ENCODE measurements at regions of chr10 and their contacts with region 1.

Region 1: DNA sequence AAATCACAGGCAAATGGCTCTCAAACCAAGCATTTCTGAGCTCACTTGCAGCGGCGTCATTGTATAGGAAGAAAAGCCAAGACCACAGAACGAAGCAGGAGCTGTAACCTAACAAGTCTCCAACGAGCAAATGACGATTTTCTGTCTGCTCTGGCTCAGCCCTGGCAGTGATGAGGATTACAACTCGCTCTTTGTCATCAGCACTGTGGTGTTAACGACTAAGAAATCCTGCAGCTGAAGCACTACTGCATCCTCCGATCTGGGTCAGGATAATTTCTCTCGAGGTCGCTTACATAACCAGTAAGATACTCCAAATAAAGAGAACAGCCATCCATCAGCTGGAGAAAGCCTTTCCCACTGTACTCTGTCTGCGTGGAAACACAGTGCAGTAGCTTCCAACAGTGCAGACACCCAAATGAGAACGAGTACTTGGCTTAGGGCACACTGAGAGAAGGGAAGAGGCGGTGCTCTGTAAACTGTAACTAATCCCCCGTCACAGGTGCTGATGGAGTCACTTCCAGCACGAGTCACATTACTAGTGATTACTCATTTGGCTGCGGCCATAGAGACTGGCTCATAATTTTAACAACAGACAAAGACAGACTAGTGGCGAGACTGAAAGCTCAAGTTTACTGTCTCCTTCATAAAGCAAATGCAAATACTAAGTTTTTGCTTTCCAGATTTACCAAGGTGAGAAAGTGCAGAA is 135.8 kb downstream of the NRBF2 start:
- DNase-seq: peak; percentile 86 to 95 (median 92)
- H3K4me3 ChIP-seq: peak overlapping the region; percentile 59 to 83
- H3K4me3 Mint-ChIP-seq: peak overlapping the region; percentile 96 to 100 (median 98)
- H3K27ac ChIP-seq: peak overlapping the region; percentile 94
- H3K27ac Mint-ChIP-seq: peak overlapping the region; percentile 95 to 100 (median 100)
- H3K4me1 ChIP-seq: peaks cover 35% of the 10 kb centered on the region
- H3K4me1 Mint-ChIP-seq: peaks cover 10 to 25% (median 19%) of the 10 kb centered on the region in 4 donors
- H3K27me3 ChIP-seq: no peaks in the 10 kb centered on the region
- H3K27me3 Mint-ChIP-seq: no peaks in the 10 kb centered on the region

Region 2: GRCh38 chr10:62384057-62384446 is 884.9 kb before region 1 on chr10:
- CTCF ChIA-PET with region 1: no interaction called
- POLR2A ChIA-PET with region 1: no interaction called
- intact Hi-C with region 1: loop called (anchors 5 kb)
- DNase-seq: peak; percentile 70 to 90 (median 72)
- H3K4me3 ChIP-seq: peak overlapping the region in 1 of 2 donors; percentile 20
- H3K4me3 Mint-ChIP-seq: peak overlapping the region; percentile 41 to 69 (median 62)
- H3K27ac ChIP-seq: peak overlapping the region; percentile 52
- H3K27ac Mint-ChIP-seq: peak overlapping the region; percentile 70 to 88 (median 81)
- H3K4me1 ChIP-seq: peaks cover 48% of the 10 kb centered on the region
- H3K4me1 Mint-ChIP-seq: peaks cover 42 to 87% (median 57%) of the 10 kb centered on the region in 4 donors
- H3K27me3 ChIP-seq: no peaks in the 10 kb centered on the region
- H3K27me3 Mint-ChIP-seq: no peaks in the 10 kb centered on the region

Region 3: GRCh38 chr10:63217120-63217605 is 51.8 kb before region 1 on chr10:
- CTCF ChIA-PET with region 1: interaction called, 14 read pairs
- POLR2A ChIA-PET with region 1: interaction called, 6 read pairs
- intact Hi-C with region 1: loop called (anchors 1 kb)
- DNase-seq: peak in 4 of 5 donors; percentile 60 to 68 (median 64)
- H3K4me3 ChIP-seq: no peak overlapping the region
- H3K4me3 Mint-ChIP-seq: peak overlapping the region in 4 of 8 donors; percentile 3 to 61 (median 24)
- H3K27ac ChIP-seq: no peak overlapping the region
- H3K27ac Mint-ChIP-seq: peak overlapping the region in 6 of 7 donors; percentile 25 to 81 (median 68)
- H3K4me1 ChIP-seq: peaks cover 50% of the 10 kb centered on the region
- H3K4me1 Mint-ChIP-seq: peaks cover 41 to 61% (median 43%) of the 10 kb centered on the region in 4 donors
- H3K27me3 ChIP-seq: no peaks in the 10 kb centered on the region
- H3K27me3 Mint-ChIP-seq: no peaks in the 10 kb centered on the region

Region 4: DNA sequence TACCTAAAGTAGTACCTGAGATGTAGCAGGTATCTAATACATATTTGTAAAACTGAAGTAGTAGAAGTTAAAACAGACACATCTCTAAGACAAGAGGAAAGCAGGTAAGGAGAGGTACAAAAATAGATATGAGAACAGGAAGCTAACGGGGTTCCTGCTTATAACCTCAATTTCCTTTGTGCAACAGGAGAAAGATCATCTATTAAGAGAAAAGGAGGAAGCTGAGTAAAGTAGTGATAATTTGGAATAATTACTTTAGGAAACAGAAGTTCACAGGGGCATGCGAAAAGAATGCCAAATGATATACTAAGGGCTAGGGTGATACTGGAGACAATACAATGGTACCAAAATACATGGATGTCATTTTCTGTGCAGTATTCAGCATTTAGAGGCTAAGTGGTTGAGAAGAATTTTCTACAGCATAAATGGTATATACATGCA is 27.1 kb before region 1 on chr10:
- CTCF ChIA-PET with region 1: interaction called, 3 read pairs
- POLR2A ChIA-PET with region 1: interaction called, 27 read pairs
- intact Hi-C with region 1: no loop called
- DNase-seq: peak in 1 of 5 donors; percentile 34
- H3K4me3 ChIP-seq: peak overlapping the region in 1 of 2 donors; percentile 3
- H3K4me3 Mint-ChIP-seq: peak overlapping the region; percentile 34 to 85 (median 80)
- H3K27ac ChIP-seq: peak overlapping the region; percentile 11
- H3K27ac Mint-ChIP-seq: peak overlapping the region; percentile 60 to 93 (median 75)
- H3K4me1 ChIP-seq: peaks cover 88% of the 10 kb centered on the region
- H3K4me1 Mint-ChIP-seq: peaks cover 55 to 84% (median 71%) of the 10 kb centered on the region in 4 donors
- H3K27me3 ChIP-seq: no peaks in the 10 kb centered on the region
- H3K27me3 Mint-ChIP-seq: no peaks in the 10 kb centered on the region

Region 5: GRCh38 chr10:63388421-63389031 is 119.6 kb after region 1 on chr10:
- CTCF ChIA-PET with region 1: no interaction called
- POLR2A ChIA-PET with region 1: no interaction called
- intact Hi-C with region 1: loop called (anchors 5 kb)
- DNase-seq: peak in 4 of 5 donors; percentile 44 to 63 (median 53)
- H3K4me3 ChIP-seq: peak overlapping the region; percentile 14 to 31
- H3K4me3 Mint-ChIP-seq: peak overlapping the region; percentile 69 to 92 (median 82)
- H3K27ac ChIP-seq: peak overlapping the region; percentile 23
- H3K27ac Mint-ChIP-seq: peak overlapping the region; percentile 24 to 83 (median 76)
- H3K4me1 ChIP-seq: peaks cover 40% of the 10 kb centered on the region
- H3K4me1 Mint-ChIP-seq: peaks cover 54 to 86% (median 71%) of the 10 kb centered on the region in 4 donors
- H3K27me3 ChIP-seq: no peaks in the 10 kb centered on the region
- H3K27me3 Mint-ChIP-seq: no peaks in the 10 kb centered on the region

Region 6: GRCh38 chr10:63521416-63522276 is 252.7 kb after region 1 on chr10:
- CTCF ChIA-PET with region 1: interaction called, 10 read pairs
- POLR2A ChIA-PET with region 1: interaction called, 58 read pairs
- intact Hi-C with region 1: loop called (anchors 1 kb)
- DNase-seq: peak; percentile 53 to 71 (median 59)
- H3K4me3 ChIP-seq: peak overlapping the region; percentile 79 to 92
- H3K4me3 Mint-ChIP-seq: peak overlapping the region; percentile 80 to 93 (median 86)
- H3K27ac ChIP-seq: peak overlapping the region; percentile 78
- H3K27ac Mint-ChIP-seq: peak overlapping the region; percentile 89 to 96 (median 94)
- H3K4me1 ChIP-seq: peaks cover 63% of the 10 kb centered on the region
- H3K4me1 Mint-ChIP-seq: peaks cover 47 to 79% (median 66%) of the 10 kb centered on the region in 4 donors
- H3K27me3 ChIP-seq: no peaks in the 10 kb centered on the region
- H3K27me3 Mint-ChIP-seq: no peaks in the 10 kb centered on the region